ENCODE measurements at regions of chr11 and their contacts with region 1.

Region 1: GRCh38 chr11:35174666-35175065 is 35.7 kb downstream of the CD44 start:
- DNase-seq: no peak
- H3K4me3 ChIP-seq: no peak overlapping the region
- H3K27me3 ChIP-seq: no peaks in the 10 kb centered on the region
- CTCF ChIP-seq: no peak

Region 2: GRCh38 chr11:35200811-35201341 is 26.2 kb after region 1 on chr11:
- CTCF ChIA-PET with region 1: interaction called, 3 read pairs
- POLR2A ChIA-PET with region 1: interaction called, 13 read pairs
- DNase-seq: no peak
- H3K4me3 ChIP-seq: no peak overlapping the region
- H3K27me3 ChIP-seq: no peaks in the 10 kb centered on the region
- CTCF ChIP-seq: no peak

Region 3: GRCh38 chr11:35662649-35663407 is 488.2 kb after region 1 on chr11 and contains the start of gene TRIM44:
- CTCF ChIA-PET with region 1: no interaction called
- POLR2A ChIA-PET with region 1: no interaction called
- DNase-seq: peak; percentile 50
- H3K4me3 ChIP-seq: peak within 1 kb of the TSS; percentile 66
- H3K27me3 ChIP-seq: no peaks in the 10 kb centered on the region
- CTCF ChIP-seq: no peak
- polyA plus RNA-seq, gene TRIM44: 62.0 and 69.9 TPM in 2 replicates